Naive thymus-derived CD4-positive, alpha-beta T cell (primary cell): ENCODE measurements at regions of chr2 and their contacts with region 1.

Region 1: GRCh38 chr2:189466660-189467059 is 25.4 kb downstream of the WDR75 start:
- DNase-seq: peak in 6 of 9 donors; percentile 4 to 34 (median 20)
- ATAC-seq: peak; percentile 60
- H3K4me3 ChIP-seq: no peak overlapping the region
- H3K4me3 Mint-ChIP-seq: no peak overlapping the region
- H3K27ac ChIP-seq: no peak overlapping the region
- H3K27ac Mint-ChIP-seq: peak overlapping the region in 5 of 9 donors; percentile 12 to 59 (median 32)
- H3K4me1 ChIP-seq: no peaks in the 10 kb centered on the region
- H3K4me1 Mint-ChIP-seq: peaks cover 0 to 5% (median 0%) of the 10 kb centered on the region in 7 donors
- H3K27me3 ChIP-seq: no peaks in the 10 kb centered on the region
- H3K27me3 Mint-ChIP-seq: no peaks in the 10 kb centered on the region

Region 2: DNA sequence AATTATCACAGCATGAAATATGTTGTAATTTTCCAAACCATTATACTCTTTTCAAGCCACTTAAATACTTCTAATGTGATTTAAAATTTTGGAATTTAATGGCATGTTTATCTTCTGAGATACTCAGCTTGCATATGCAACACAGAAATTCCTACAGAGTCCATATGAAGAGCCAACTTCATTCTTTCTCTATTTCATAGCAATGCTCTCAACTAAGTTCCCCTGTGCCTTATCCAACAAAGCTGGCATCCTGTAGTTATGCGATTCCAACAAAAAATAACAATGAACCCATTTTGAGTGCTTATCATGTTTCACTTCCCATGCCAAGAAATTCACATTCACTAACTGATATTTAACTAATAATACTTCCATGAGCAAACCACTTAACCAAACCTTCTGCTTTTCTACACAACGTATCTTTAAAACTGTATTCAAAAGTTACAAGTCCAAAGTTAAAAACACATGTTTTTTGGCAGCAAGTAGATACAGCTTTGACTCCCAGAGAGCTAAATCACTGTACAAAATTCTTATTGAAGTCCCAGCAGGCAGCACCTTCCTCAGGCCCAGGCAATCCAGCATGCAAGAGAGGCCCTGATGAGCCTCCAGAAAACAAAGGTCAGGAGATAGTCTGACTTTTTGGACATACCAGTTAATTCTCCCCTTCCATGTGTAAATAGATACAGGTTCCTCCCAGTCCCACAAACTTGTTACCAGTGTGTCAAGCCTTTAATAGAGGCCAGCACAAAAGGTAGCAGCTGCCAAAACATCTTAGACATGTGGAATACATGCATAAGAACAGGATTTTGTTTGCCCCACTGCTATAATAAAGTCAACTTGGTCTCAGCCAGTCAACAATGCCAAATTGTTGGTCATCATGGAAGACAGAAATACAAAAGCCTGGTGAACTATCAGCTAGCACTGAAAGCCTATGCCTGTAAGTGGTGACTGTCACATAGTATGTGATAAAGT is 138.5 kb before region 1 on chr2:
- CTCF ChIA-PET with region 1: no interaction called
- POLR2A ChIA-PET with region 1: no interaction called
- intact Hi-C with region 1: no loop called
- DNase-seq: no peak
- ATAC-seq: no peak
- H3K4me3 ChIP-seq: no peak overlapping the region
- H3K4me3 Mint-ChIP-seq: no peak overlapping the region
- H3K27ac ChIP-seq: no peak overlapping the region
- H3K27ac Mint-ChIP-seq: no peak overlapping the region
- H3K4me1 ChIP-seq: no peaks in the 10 kb centered on the region
- H3K4me1 Mint-ChIP-seq: peaks cover 0 to 6% (median 3%) of the 10 kb centered on the region in 7 donors
- H3K27me3 ChIP-seq: no peaks in the 10 kb centered on the region
- H3K27me3 Mint-ChIP-seq: no peaks in the 10 kb centered on the region

Region 3: GRCh38 chr2:189633392-189633811 is 166.7 kb after region 1 on chr2:
- CTCF ChIA-PET with region 1: interaction called, 3 read pairs
- POLR2A ChIA-PET with region 1: interaction called, 3 read pairs
- intact Hi-C with region 1: loop called (anchors 1 to 2 kb)
- DNase-seq: peak in 5 of 9 donors; percentile 23 to 39 (median 31)
- ATAC-seq: peak; percentile 52
- H3K4me3 ChIP-seq: no peak overlapping the region
- H3K4me3 Mint-ChIP-seq: no peak overlapping the region
- H3K27ac ChIP-seq: no peak overlapping the region
- H3K27ac Mint-ChIP-seq: no peak overlapping the region
- H3K4me1 ChIP-seq: no peaks in the 10 kb centered on the region
- H3K4me1 Mint-ChIP-seq: peaks cover 0 to 12% (median 3%) of the 10 kb centered on the region in 7 donors
- H3K27me3 ChIP-seq: no peaks in the 10 kb centered on the region
- H3K27me3 Mint-ChIP-seq: peaks cover 0 to 3% (median 0%) of the 10 kb centered on the region in 5 donors

Region 4: DNA sequence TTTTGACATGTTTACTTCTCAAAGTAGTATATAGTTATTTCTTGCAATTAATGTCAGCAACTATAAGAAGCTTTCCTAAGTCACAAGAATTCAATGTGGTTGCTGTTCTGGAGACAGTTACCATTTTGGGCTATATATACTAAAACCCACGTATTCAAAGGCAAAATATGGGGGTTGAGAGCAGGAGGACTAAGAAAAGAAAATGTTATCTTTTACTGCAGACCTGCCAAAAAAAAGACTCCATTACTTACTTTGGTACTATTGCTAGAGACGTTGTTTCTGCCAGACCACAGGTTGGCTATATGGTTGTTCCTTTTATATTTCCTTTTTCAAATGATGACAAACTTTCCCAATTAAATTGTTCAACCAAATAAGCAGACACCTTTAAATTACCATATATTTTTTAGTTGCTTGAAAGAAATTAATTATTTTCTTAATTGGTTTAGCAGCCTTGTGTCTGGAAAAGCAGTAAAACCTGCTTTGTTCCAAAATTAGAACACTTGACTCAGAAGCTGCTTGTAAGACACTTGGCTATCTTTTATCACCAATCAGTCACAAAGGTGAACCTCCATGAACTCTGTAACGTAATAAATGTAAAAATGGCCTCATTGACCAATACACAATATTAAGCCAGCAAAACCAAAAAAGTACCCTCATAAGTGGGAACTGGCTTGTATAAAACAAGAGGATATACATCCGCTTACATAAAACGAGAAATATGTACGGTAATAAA is 304.1 kb after region 1 on chr2:
- CTCF ChIA-PET with region 1: no interaction called
- POLR2A ChIA-PET with region 1: no interaction called
- intact Hi-C with region 1: loop called in 1 of 2 experiments (anchors 5 kb)
- DNase-seq: no peak
- ATAC-seq: no peak
- H3K4me3 ChIP-seq: no peak overlapping the region
- H3K4me3 Mint-ChIP-seq: no peak overlapping the region
- H3K27ac ChIP-seq: no peak overlapping the region
- H3K27ac Mint-ChIP-seq: no peak overlapping the region
- H3K4me1 ChIP-seq: no peaks in the 10 kb centered on the region
- H3K4me1 Mint-ChIP-seq: peaks cover 0 to 15% (median 0%) of the 10 kb centered on the region in 7 donors
- H3K27me3 ChIP-seq: no peaks in the 10 kb centered on the region
- H3K27me3 Mint-ChIP-seq: no peaks in the 10 kb centered on the region